ENCODE measurements at regions of chr14 and their contacts with region 1.

Region 1: DNA sequence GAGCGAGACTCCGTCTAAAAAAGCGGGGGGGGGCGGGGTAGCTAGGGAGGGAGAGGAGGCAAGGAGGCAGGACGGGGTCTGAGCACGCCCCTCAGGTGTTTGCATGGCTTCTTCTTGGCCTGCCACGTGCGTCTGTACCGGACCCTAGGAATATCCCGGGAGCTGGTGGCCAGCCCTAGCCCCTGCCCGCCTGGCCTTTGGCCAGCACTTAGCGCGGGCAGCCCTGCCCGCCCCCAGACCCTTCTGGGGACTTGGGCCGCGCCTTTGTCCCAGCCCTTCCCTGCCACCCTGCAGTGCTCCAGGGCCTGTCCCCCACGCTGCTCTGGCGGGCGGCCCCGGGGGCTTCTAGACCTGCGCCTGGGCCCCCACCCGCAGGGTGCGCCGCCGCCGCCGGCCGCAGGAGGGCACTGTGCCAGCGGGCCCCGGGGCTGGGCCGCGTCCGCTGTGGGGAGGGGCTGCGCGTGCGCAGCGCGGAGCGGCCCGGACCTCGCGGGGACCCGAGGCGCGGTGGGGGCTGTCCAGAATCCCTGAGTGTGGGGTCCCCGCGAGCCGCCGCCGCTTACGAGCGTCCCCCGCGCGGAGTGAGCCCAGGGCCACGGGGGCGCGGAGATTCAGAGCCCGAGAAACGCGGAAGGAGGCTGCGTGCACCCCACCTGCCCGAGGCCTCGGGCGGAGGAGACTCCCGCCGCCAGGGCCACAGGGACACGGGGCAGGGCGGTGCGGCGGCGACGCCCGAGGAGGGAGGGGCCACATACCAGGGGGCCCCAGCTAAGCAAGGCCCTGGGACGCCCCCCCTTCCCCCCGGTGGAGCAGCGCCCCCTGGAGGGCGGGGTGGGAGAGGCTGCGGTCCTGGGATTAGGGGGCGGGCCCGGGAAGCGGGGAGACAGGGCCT is 21.0 kb downstream of the SLC25A29 start:
- DNase-seq: peak; percentile 72 to 88
- H3K4me3 ChIP-seq: peak overlapping the region; percentile 84
- H3K4me3 Mint-ChIP-seq: peak overlapping the region; percentile 72
- H3K27ac Mint-ChIP-seq: peak overlapping the region; percentile 68
- H3K4me1 ChIP-seq: 0 out of 2 replicates have a peak, but pooled peaks cover 5% of the 10 kb centered on the region
- H3K4me1 Mint-ChIP-seq: peaks cover 6% of the 10 kb centered on the region
- H3K27me3 ChIP-seq: no peaks in the 10 kb centered on the region
- H3K27me3 Mint-ChIP-seq: no peaks in the 10 kb centered on the region
- CTCF ChIP-seq: peak; percentile 65 to 89

Region 2: GRCh38 chr14:100271247-100271939 is 13.9 kb before region 1 on chr14:
- CTCF ChIA-PET with region 1: interaction called, 3 read pairs
- POLR2A ChIA-PET with region 1: no interaction called
- intact Hi-C with region 1: loop called (anchors 1 kb)
- DNase-seq: peak in 1 of 2 experiments; percentile 75
- H3K4me3 ChIP-seq: no peak overlapping the region
- H3K4me3 Mint-ChIP-seq: no peak overlapping the region
- H3K27ac Mint-ChIP-seq: peak overlapping the region; percentile 53
- H3K4me1 ChIP-seq: peaks cover 7% of the 10 kb centered on the region
- H3K4me1 Mint-ChIP-seq: peaks cover 17% of the 10 kb centered on the region
- H3K27me3 ChIP-seq: no peaks in the 10 kb centered on the region
- H3K27me3 Mint-ChIP-seq: no peaks in the 10 kb centered on the region
- CTCF ChIP-seq: peak; percentile 36 to 50